Left colon (tissue), 2 donors: ENCODE measurements at regions of chr4 and their contacts with region 1.

Region 1: GRCh38 chr4:6327041-6327917 is 57.6 kb downstream of the WFS1 start:
- DNase-seq: peak; percentile 56 to 81
- ATAC-seq: peak; percentile 75

Region 2: GRCh38 chr4:5956285-5957021 is 370.8 kb before region 1 on chr4:
- intact Hi-C with region 1: no loop called
- DNase-seq: no peak
- ATAC-seq: no peak

Region 3: GRCh38 chr4:6250235-6250983 is 76.9 kb before region 1 on chr4:
- intact Hi-C with region 1: loop called (anchors 5 kb)
- DNase-seq: no peak
- ATAC-seq: peak; percentile 55

Region 4: DNA sequence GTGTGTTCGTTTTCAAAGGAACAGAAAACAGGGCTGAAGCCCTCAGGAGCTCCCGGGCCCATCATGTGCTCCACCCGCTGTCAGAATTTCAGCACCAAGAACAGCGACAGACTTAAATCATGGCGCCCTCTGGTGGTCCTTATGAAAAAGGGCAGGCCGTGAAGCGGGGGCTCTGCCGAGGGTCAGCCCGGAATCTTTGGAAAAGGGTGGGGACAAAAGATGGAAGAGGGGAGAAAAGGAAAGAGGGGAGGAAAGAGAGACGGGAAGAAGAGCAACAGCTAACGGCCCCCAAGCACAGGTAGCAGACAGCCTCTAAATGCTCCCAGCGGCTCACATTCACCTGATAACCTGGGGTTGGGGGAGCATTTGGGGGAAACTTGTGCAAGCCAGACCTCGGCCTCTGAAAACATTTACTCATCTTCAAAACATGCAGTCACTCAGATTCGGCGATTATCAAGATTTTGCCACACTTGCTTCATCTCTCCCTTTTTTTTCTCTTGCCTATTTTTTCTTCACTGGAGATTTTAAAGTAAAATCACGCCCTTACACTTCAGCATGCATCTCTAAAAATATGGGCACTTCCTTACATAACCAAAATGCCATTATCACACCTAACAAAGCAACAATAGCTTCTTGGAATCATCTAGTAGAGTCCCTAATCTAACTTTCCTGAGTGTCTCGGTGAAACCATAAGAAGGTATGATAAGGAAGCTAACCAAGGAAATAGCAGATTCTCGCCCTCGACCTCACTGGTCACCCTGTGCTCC is 219.6 kb after region 1 on chr4:
- intact Hi-C with region 1: loop called in 1 of 2 experiments (anchors 10 kb)
- DNase-seq: peak in 1 of 2 donors; percentile 26
- ATAC-seq: peak; percentile 38